CD4-positive, alpha-beta T cell (primary cell): ENCODE measurements at regions of chr13 and their contacts with region 1.

Region 1: GRCh38 chr13:44169018-44169911 is 204.4 kb upstream of the SERP2 start:
- DNase-seq: no peak
- ATAC-seq: no peak
- H3K4me3 ChIP-seq: no peak overlapping the region
- H3K4me3 Mint-ChIP-seq: no peak overlapping the region
- H3K27ac ChIP-seq: no peak overlapping the region
- H3K27ac Mint-ChIP-seq: no peak overlapping the region
- H3K4me1 ChIP-seq: no peaks in the 10 kb centered on the region
- H3K4me1 Mint-ChIP-seq: no peaks in the 10 kb centered on the region
- H3K27me3 ChIP-seq: no peaks in the 10 kb centered on the region
- H3K27me3 Mint-ChIP-seq: no peaks in the 10 kb centered on the region
- CTCF ChIP-seq: no peak

Region 2: GRCh38 chr13:44116562-44117332 is 52.5 kb before region 1 on chr13:
- CTCF ChIA-PET with region 1: interaction called, 3 read pairs
- POLR2A ChIA-PET with region 1: no interaction called
- intact Hi-C with region 1: loop called in 1 of 2 experiments (anchors 5 kb)
- DNase-seq: peak in 3 of 14 experiments; percentile 19 to 30 (median 29)
- ATAC-seq: peak; percentile 29
- H3K4me3 ChIP-seq: no peak overlapping the region
- H3K4me3 Mint-ChIP-seq: no peak overlapping the region
- H3K27ac ChIP-seq: no peak overlapping the region
- H3K27ac Mint-ChIP-seq: no peak overlapping the region
- H3K4me1 ChIP-seq: peaks cover 7% of the 10 kb centered on the region
- H3K4me1 Mint-ChIP-seq: peaks cover 16% of the 10 kb centered on the region
- H3K27me3 ChIP-seq: no peaks in the 10 kb centered on the region
- H3K27me3 Mint-ChIP-seq: no peaks in the 10 kb centered on the region
- CTCF ChIP-seq: no peak

Region 3: DNA sequence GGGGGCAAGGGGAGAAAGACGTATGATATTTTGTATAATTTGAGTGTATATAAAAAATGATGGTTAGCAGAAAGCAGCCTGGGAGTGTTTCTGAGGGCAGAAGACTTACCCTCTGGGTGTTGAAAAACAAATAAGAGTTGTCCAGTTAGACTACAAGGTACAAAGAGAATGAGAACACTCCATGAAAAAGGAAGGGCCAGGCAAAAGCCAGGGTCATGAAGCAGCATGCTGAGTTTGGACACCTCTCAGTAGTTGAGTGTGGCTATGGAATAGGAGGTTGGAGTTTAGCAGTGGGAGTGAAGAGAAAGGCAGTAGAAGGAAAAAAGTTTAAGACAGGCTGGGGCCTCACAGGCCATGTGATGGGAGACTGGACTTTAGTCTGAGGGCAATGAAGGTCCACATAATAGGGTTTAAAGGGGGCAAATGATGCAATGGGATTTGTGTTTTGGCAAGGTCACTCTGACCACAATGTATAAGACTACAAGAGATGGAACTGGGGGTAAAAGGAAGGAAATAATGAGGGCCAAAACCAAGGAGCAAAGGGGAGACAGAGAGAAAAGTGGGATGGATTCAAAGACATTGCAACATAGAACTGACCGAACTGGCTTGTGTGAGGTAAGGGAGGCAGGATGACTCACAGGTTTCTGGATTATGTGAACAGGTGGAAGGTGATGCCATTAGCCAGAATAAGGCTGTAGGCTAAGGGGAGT is 280.9 kb after region 1 on chr13:
- CTCF ChIA-PET with region 1: no interaction called
- POLR2A ChIA-PET with region 1: no interaction called
- intact Hi-C with region 1: no loop called
- DNase-seq: no peak
- ATAC-seq: no peak
- H3K4me3 ChIP-seq: no peak overlapping the region
- H3K4me3 Mint-ChIP-seq: no peak overlapping the region
- H3K27ac ChIP-seq: no peak overlapping the region
- H3K27ac Mint-ChIP-seq: no peak overlapping the region
- H3K4me1 ChIP-seq: no peaks in the 10 kb centered on the region
- H3K4me1 Mint-ChIP-seq: no peaks in the 10 kb centered on the region
- H3K27me3 ChIP-seq: no peaks in the 10 kb centered on the region
- H3K27me3 Mint-ChIP-seq: no peaks in the 10 kb centered on the region
- CTCF ChIP-seq: no peak